ENCODE measurements at regions of chr2 and their contacts with region 1.

Region 1: DNA sequence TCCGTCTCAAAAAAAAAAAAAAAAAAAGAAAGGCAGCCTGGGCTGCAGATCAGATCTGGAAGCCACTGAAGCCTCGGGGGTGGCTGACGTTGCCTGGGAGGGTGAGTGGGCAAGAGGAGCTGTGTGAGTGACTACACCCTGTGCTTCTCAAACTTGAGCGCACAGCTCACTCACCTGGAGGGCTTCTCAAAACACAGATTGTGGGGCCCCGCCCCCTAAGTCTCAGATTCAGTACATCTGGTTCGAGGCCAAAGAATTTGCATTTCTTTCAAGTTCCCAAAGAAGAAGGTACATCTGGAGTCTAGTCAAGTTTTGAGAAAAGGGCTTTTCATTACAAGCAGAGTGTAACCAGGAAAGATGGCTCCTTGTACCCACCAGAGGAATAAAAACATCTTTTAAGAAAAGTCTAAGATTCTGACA is 97.7 kb upstream of the CAB39 start:
- DNase-seq: peak; percentile 26
- H3K4me3 Mint-ChIP-seq: peak overlapping the region; percentile 26
- H3K27ac Mint-ChIP-seq: peak overlapping the region; percentile 55
- H3K4me1 Mint-ChIP-seq: peaks cover 54% of the 10 kb centered on the region
- H3K27me3 Mint-ChIP-seq: no peaks in the 10 kb centered on the region

Region 2: DNA sequence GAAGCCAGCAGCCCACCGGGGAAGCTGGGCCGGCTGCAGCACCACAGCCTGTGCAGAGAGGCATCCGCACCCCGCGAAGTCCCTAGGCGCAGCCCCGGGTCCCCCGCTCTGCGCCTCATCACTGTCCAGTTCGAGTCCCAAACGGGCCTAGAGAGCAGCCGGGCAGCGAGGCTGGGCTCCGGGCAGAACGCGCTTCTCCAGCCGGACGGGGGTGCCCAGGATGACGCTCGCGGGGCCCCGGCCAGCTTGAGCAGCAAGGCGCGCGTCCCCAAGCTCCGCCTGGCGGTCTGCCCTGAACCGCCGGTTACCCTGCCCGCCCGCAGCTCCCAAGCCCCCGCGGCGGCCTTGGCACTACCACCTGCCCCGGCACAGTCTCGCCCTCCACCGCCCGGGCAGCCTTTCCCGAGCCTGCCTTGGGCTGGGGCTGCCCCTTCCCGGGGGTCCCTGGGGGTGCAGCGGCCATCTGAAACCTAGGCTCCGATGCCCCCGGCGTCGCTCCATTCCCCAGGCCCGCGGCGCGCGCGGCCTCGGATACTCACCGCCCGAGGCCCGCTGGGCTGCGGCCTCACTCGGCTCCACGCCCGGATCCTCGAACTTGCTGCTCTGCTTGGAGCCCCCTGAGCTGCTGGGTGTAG is 546.8 kb before region 1 on chr2:
- intact Hi-C with region 1: loop called (anchors 2 kb)
- DNase-seq: peak; percentile 22
- H3K4me3 Mint-ChIP-seq: peak overlapping the region; percentile 88
- H3K27ac Mint-ChIP-seq: no peak overlapping the region
- H3K4me1 Mint-ChIP-seq: peaks cover 22% of the 10 kb centered on the region
- H3K27me3 Mint-ChIP-seq: peaks cover 21% of the 10 kb centered on the region

Region 3: DNA sequence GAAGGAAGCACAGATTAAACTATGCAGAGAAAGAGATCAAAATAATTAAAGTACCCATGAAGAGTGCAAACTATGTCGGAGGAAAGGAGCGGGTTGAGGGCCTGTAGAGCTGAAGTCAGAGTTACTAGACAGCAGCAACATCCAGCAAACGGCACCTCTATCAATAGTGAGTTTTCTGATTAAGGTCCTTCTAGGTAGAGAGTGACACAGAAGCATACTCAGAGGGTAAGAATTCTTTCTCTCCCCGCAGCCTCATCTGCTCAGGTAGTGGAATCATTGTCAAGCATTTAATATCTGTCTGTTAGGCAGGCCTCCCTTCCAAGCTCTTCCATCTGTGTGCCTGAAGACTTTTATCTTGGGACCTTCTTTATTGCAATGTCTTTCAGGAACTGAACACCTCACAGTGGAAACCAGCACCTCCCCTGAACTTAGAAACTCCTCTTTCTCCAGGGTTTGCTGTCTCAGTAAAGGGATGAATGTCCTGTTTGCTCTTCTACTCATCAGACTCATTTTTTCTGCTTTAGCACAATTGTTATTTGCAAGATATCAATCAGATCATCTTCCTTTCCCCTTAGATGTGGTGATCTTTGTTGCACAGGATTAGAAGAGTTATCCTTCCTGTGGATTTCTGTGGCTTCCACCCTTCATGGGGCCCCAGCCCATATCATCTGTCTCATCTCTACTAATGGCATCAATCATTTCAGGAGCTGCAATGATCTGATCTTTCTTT is 360.6 kb before region 1 on chr2:
- intact Hi-C with region 1: loop called (anchors 1 kb)
- DNase-seq: no peak
- H3K4me3 Mint-ChIP-seq: no peak overlapping the region
- H3K27ac Mint-ChIP-seq: no peak overlapping the region
- H3K4me1 Mint-ChIP-seq: peaks cover 12% of the 10 kb centered on the region
- H3K27me3 Mint-ChIP-seq: no peaks in the 10 kb centered on the region

Region 4: DNA sequence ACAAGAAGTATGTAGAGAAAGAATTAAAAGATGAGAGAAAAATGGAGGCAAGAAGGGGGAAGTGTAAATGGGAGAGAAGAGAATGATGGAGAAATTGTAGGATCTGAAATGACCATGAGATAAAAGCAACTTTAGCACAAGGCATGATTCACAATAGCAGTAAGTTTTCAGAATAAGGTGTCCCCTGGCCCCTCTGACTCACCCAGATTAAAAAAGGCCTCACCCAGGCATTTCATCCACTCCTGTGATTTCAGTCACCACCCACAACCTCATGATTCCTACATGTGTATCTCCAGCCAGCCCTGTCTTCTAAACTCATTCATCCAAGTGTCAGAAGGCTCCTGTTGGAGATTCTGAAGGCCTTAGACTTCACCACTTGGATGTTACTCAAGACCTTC is 142.3 kb before region 1 on chr2:
- intact Hi-C with region 1: loop called (anchors 1 kb)
- DNase-seq: peak; percentile 11
- H3K4me3 Mint-ChIP-seq: peak overlapping the region; percentile 1
- H3K27ac Mint-ChIP-seq: peak overlapping the region; percentile 85
- H3K4me1 Mint-ChIP-seq: peaks cover 48% of the 10 kb centered on the region
- H3K27me3 Mint-ChIP-seq: no peaks in the 10 kb centered on the region

Region 5: DNA sequence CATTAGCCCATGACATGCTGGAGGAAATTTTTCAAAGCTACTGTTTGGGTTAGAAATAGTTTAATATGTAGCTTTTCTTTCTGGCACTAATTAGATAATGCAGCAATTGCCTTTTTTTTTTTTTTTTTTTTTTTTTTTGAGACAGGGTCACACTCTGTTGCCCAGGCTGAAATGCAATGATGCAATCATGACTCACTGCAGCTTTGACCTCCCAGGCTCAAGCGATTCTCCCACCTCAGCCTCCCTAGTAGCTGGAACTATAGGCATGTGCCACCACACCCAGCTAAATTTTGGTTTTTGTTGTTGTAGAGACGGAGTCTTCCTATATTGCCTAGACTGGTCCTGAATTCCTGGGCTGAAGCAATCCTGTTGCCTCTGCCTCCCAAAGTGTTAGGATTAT is 62.7 kb before region 1 on chr2:
- intact Hi-C with region 1: no loop called
- DNase-seq: no peak
- H3K4me3 Mint-ChIP-seq: no peak overlapping the region
- H3K27ac Mint-ChIP-seq: no peak overlapping the region
- H3K4me1 Mint-ChIP-seq: peaks cover 13% of the 10 kb centered on the region
- H3K27me3 Mint-ChIP-seq: peaks cover 2% of the 10 kb centered on the region

Region 6: DNA sequence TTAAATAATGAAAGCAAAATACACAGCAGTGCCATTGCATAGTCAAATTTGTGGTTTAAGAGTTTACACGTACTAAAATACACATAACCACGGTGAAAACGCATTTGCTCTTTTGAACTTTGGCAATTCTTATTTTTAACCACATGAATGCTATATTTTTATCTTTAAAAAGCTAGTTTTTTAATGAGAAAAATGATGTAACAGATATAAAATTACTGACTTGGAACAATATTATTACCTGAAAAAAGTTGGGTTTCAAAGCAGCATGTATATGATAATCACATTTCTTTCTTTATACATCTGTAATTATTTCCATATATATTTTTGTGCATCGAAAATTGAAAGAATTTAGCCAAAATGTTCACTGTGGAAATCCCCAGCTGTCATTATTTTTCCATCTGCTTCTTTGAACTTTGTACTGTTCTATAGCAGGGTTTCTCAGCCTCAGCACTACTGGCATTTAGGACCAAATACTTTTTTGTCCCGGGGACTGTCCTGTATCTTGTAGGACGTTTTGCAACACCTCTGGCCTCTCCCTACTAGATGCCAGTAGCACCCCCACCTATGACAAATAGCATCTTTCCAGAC is 21.9 kb after region 1 on chr2:
- intact Hi-C with region 1: loop called (anchors 2 kb)
- DNase-seq: no peak
- H3K4me3 Mint-ChIP-seq: peak overlapping the region; percentile 15
- H3K27ac Mint-ChIP-seq: peak overlapping the region; percentile 83
- H3K4me1 Mint-ChIP-seq: peaks cover 31% of the 10 kb centered on the region
- H3K27me3 Mint-ChIP-seq: no peaks in the 10 kb centered on the region

Region 7: DNA sequence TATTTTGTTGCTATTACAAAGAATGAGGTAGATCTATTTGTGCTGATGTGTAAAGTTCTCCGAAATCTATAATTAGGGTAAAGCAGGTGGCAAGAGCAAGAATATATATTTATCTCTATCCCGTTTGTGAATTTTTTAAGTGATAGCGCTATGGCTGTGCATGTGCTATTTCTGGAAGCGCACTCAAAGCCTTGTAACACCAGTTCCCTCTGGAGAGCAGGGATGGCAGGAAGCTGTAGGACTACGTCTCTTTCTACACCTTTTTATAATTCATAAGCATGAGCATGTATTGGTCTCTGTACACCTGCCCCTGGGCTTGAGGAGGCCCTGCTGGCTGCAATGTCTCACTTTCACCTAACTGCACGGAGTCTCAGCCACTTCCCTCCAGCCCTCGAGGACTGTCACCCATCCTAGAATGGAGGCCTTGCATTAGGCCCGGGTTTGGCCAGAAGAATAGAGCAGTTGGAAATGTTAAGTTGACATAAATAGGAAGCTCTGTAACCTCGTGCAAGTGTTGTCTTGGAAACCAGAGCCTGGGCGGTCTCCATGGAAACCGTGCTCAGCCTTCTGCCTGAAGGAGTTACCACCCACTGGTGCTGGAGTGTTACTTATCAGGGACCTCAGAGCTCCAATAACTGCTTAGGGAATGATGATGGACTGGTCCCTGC is 270.7 kb after region 1 on chr2:
- intact Hi-C with region 1: no loop called
- DNase-seq: no peak
- H3K4me3 Mint-ChIP-seq: no peak overlapping the region
- H3K27ac Mint-ChIP-seq: no peak overlapping the region
- H3K4me1 Mint-ChIP-seq: no peaks in the 10 kb centered on the region
- H3K27me3 Mint-ChIP-seq: peaks cover 16% of the 10 kb centered on the region

Measured in activated T-helper 1 cell treated with anti-CD3 and anti-CD28 coated beads, Interleukin-12 subunit alpha, Interleukin-12 subunit beta, Interleukin-2, Interleukin-4 antibody, amounts not matched to agents 30 ng/mL and 10 ng/mL and 1 ng/mL, durations not matched to agents 14 hours and 24 hours and 36 hours (primary cell).